Activated CD4-positive, alpha-beta T cell treated with anti-CD3 and anti-CD28 coated beads, Interleukin-2, amount 10 ng/mL, durations not matched to agents 7 days and 5 days (primary cell): ENCODE measurements at regions of chr2 and their contacts with region 1.

Region 1: DNA sequence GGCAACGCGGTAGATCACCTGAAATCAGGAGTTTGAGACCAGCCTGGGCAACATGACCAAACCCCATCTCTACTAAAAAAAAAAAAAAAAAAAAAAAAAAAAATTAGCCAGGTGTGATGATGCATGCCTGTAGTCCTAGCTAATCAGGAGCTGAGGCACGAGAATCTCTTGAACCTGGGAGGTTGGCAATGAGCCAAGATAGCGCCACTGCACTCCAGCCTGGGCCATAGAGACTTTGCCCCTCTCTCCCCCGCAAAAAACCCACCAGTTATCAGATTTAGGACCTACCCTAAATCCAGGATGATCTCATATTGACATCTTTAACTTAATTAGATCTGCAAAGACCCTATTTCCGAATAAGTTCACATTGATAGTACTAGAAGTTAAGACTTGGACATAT is 29.2 kb upstream of the LDAH start:
- DNase-seq: no peak
- H3K4me3 Mint-ChIP-seq: no peak overlapping the region
- H3K27ac Mint-ChIP-seq: no peak overlapping the region
- H3K4me1 Mint-ChIP-seq: no peaks in the 10 kb centered on the region
- H3K27me3 Mint-ChIP-seq: peaks cover 10% of the 10 kb centered on the region

Region 2: GRCh38 chr2:20823917-20824316 is 28.2 kb before region 1 on chr2:
- CTCF ChIA-PET with region 1: no interaction called
- POLR2A ChIA-PET with region 1: no interaction called
- DNase-seq: no peak
- H3K4me3 Mint-ChIP-seq: peak overlapping the region; percentile 34
- H3K27ac Mint-ChIP-seq: peak overlapping the region; percentile 50
- H3K4me1 Mint-ChIP-seq: peaks cover 19% of the 10 kb centered on the region
- H3K27me3 Mint-ChIP-seq: peaks cover 7% of the 10 kb centered on the region

Region 3: GRCh38 chr2:22499082-22499839 is 1647.1 kb after region 1 on chr2:
- CTCF ChIA-PET with region 1: no interaction called
- POLR2A ChIA-PET with region 1: interaction called, 11 read pairs
- DNase-seq: no peak
- H3K4me3 Mint-ChIP-seq: no peak overlapping the region
- H3K27ac Mint-ChIP-seq: no peak overlapping the region
- H3K4me1 Mint-ChIP-seq: no peaks in the 10 kb centered on the region
- H3K27me3 Mint-ChIP-seq: no peaks in the 10 kb centered on the region